ENCODE measurements at regions of chr6 and their contacts with region 1.

Region 1: DNA sequence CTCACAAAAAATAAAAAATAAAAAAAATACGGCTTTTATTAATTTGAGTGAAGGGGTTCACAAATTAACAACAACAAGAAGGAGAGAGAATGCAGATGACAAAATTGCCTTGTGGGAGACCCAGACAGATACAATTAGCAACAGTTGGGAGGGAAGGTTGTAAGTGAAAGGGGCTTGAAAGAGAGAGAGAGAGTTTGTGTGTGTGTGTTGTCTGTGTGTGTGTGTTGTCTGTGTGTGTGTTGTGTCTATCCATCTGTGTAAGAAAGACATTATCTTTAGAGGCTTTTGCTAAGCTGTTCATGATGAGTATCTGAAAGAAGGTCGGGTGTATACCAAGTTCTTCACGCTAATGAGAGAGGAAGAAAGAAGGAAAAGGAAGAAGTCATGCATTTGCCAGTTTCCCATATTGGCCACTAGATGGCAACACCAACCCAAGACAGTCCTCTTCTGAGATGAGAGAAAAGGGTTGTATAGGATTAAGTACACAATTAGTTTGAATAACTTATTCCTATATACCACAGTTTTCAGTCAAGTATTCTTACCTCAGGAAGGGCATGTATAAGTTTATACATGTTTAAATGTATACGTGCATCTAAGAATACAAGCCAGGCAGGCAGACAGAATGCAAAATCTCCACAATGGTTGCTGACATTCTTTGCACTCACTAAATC is 63.7 kb upstream of the CD2AP start:
- DNase-seq: peak in 7 of 9 donors; percentile 25 to 70 (median 62)
- ATAC-seq: peak; percentile 94
- H3K4me3 ChIP-seq: peak overlapping the region; percentile 57
- H3K4me3 Mint-ChIP-seq: peak overlapping the region; percentile 76 to 94 (median 84)
- H3K27ac ChIP-seq: peak overlapping the region; percentile 54
- H3K27ac Mint-ChIP-seq: peak overlapping the region; percentile 28 to 90 (median 86)
- H3K4me1 ChIP-seq: peaks cover 3 to 8% of the 10 kb centered on the region in 2 donors
- H3K4me1 Mint-ChIP-seq: peaks cover 6 to 29% (median 16%) of the 10 kb centered on the region in 7 donors
- H3K27me3 ChIP-seq: no peaks in the 10 kb centered on the region
- H3K27me3 Mint-ChIP-seq: peaks cover 0 to 11% (median 0%) of the 10 kb centered on the region in 5 donors

Region 2: GRCh38 chr6:47034919-47035318 is 379.0 kb before region 1 on chr6:
- CTCF ChIA-PET with region 1: no interaction called
- POLR2A ChIA-PET with region 1: no interaction called
- intact Hi-C with region 1: no loop called
- DNase-seq: no peak
- ATAC-seq: no peak
- H3K4me3 ChIP-seq: no peak overlapping the region
- H3K4me3 Mint-ChIP-seq: no peak overlapping the region
- H3K27ac ChIP-seq: no peak overlapping the region
- H3K27ac Mint-ChIP-seq: no peak overlapping the region
- H3K4me1 ChIP-seq: no peaks in the 10 kb centered on the region
- H3K4me1 Mint-ChIP-seq: no peaks in the 10 kb centered on the region
- H3K27me3 ChIP-seq: no peaks in the 10 kb centered on the region
- H3K27me3 Mint-ChIP-seq: peaks cover 10 to 26% (median 22%) of the 10 kb centered on the region in 5 donors

Region 3: DNA sequence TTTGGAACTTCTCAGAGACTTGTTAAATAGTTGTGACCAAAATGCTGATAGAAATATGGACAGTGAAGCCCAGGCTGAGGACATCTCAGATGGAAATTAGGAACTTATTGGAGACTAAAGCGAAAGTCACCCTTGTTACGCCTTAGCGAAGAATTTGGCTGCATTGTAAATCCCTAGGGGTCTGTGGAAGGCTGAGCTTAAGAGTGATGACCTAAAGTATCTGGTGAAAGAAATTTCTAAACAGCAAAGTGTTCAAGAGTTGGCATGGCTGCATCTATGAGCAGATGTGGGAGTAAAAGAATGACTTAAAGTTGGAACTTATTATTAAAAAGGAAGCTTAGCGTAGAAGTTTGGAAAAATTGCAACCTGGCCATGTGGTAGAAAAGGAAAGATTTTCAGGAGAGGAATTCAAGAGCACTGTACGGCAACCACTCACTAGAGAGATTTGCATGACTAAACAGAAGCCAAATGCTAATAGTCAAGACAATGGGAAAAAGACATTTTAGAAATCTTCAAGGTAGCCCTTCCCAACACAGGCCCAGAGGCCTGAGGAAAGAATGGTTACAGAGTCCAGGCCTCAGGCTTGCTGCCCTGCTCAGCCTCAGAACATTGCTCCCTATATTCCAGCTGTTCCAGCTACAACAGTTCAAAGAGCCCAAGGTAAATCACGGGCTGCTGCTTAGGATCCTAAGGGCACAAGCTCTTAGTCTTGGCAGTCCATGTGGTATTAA is 42.6 kb before region 1 on chr6:
- CTCF ChIA-PET with region 1: no interaction called
- POLR2A ChIA-PET with region 1: no interaction called
- intact Hi-C with region 1: no loop called
- DNase-seq: no peak
- ATAC-seq: no peak
- H3K4me3 ChIP-seq: no peak overlapping the region
- H3K4me3 Mint-ChIP-seq: no peak overlapping the region
- H3K27ac ChIP-seq: no peak overlapping the region
- H3K27ac Mint-ChIP-seq: no peak overlapping the region
- H3K4me1 ChIP-seq: no peaks in the 10 kb centered on the region
- H3K4me1 Mint-ChIP-seq: peaks cover 0 to 2% (median 0%) of the 10 kb centered on the region in 7 donors
- H3K27me3 ChIP-seq: no peaks in the 10 kb centered on the region
- H3K27me3 Mint-ChIP-seq: peaks cover 0 to 3% (median 0%) of the 10 kb centered on the region in 5 donors

Region 4: GRCh38 chr6:47535316-47536225 is 121.7 kb after region 1 on chr6:
- CTCF ChIA-PET with region 1: no interaction called
- POLR2A ChIA-PET with region 1: no interaction called
- intact Hi-C with region 1: loop called in 1 of 2 experiments (anchors 1 kb)
- DNase-seq: no peak
- ATAC-seq: no peak
- H3K4me3 ChIP-seq: no peak overlapping the region
- H3K4me3 Mint-ChIP-seq: no peak overlapping the region
- H3K27ac ChIP-seq: no peak overlapping the region
- H3K27ac Mint-ChIP-seq: no peak overlapping the region
- H3K4me1 ChIP-seq: no peaks in the 10 kb centered on the region
- H3K4me1 Mint-ChIP-seq: peaks cover 3 to 16% (median 13%) of the 10 kb centered on the region in 7 donors
- H3K27me3 ChIP-seq: no peaks in the 10 kb centered on the region
- H3K27me3 Mint-ChIP-seq: no peaks in the 10 kb centered on the region

Region 5: GRCh38 chr6:47603995-47604394 is 190.1 kb after region 1 on chr6:
- CTCF ChIA-PET with region 1: interaction called, 3 read pairs
- POLR2A ChIA-PET with region 1: no interaction called
- intact Hi-C with region 1: loop called in 1 of 2 experiments (anchors 5 kb)
- DNase-seq: no peak
- ATAC-seq: no peak
- H3K4me3 ChIP-seq: no peak overlapping the region
- H3K4me3 Mint-ChIP-seq: no peak overlapping the region
- H3K27ac ChIP-seq: no peak overlapping the region
- H3K27ac Mint-ChIP-seq: no peak overlapping the region
- H3K4me1 ChIP-seq: no peaks in the 10 kb centered on the region
- H3K4me1 Mint-ChIP-seq: peaks cover 0 to 16% (median 0%) of the 10 kb centered on the region in 7 donors
- H3K27me3 ChIP-seq: no peaks in the 10 kb centered on the region
- H3K27me3 Mint-ChIP-seq: no peaks in the 10 kb centered on the region

Region 6: DNA sequence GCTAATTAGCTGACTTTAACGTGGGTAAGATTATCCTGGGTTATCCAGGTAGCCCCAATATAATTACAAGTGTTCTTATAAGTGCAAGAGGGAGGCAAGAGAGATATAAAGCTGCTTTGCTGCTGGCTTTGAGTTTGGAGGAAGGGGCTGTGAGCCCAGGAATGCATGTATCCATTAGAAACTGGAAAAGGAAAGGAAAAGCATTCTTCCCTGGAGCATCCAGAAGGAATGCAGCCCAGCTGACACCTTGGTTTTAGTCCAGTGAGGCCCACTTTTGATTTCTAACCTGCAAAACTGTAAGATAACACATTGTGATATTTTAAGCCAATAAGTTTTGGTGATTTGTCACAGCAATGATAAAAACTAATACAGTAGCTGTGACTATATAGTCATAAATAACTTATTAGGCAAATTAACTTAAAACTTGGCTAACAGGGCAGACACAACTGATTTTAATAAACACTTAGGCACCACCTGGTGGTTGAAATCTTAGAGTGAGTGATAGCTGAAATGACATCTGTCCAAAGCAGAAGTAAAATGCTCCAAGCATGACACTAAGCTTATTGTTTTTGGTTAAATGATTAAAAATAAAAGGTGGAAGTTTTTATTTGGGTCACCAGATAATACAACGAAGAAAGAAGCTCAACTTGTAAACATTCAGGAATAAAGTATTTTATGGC is 320.1 kb after region 1 on chr6:
- CTCF ChIA-PET with region 1: no interaction called
- POLR2A ChIA-PET with region 1: no interaction called
- intact Hi-C with region 1: loop called (anchors 1 kb)
- DNase-seq: peak in 3 of 9 donors; percentile 7 to 13 (median 7)
- ATAC-seq: no peak
- H3K4me3 ChIP-seq: no peak overlapping the region
- H3K4me3 Mint-ChIP-seq: no peak overlapping the region
- H3K27ac ChIP-seq: no peak overlapping the region
- H3K27ac Mint-ChIP-seq: no peak overlapping the region
- H3K4me1 ChIP-seq: peaks cover 0 to 4% of the 10 kb centered on the region in 2 donors
- H3K4me1 Mint-ChIP-seq: peaks cover 0 to 2% (median 0%) of the 10 kb centered on the region in 7 donors
- H3K27me3 ChIP-seq: peaks cover 0 to 4% of the 10 kb centered on the region in 2 donors
- H3K27me3 Mint-ChIP-seq: peaks cover 0 to 11% (median 4%) of the 10 kb centered on the region in 5 donors

Region 7: GRCh38 chr6:49409951-49410542 is 1996.2 kb after region 1 on chr6:
- CTCF ChIA-PET with region 1: no interaction called
- POLR2A ChIA-PET with region 1: no interaction called
- intact Hi-C with region 1: loop called in 1 of 2 experiments (anchors 1 kb)
- DNase-seq: peak; percentile 5 to 41 (median 28)
- ATAC-seq: peak; percentile 79
- H3K4me3 ChIP-seq: no peak overlapping the region
- H3K4me3 Mint-ChIP-seq: no peak overlapping the region
- H3K27ac ChIP-seq: no peak overlapping the region
- H3K27ac Mint-ChIP-seq: no peak overlapping the region
- H3K4me1 ChIP-seq: no peaks in the 10 kb centered on the region
- H3K4me1 Mint-ChIP-seq: no peaks in the 10 kb centered on the region
- H3K27me3 ChIP-seq: peaks cover 0 to 5% of the 10 kb centered on the region in 2 donors
- H3K27me3 Mint-ChIP-seq: peaks cover 4 to 26% (median 21%) of the 10 kb centered on the region in 5 donors